Activated CD4-positive, alpha-beta T cell treated with anti-CD3 and anti-CD28 coated beads, Interleukin-2, amount 10 ng/mL, durations not matched to agents 24 days and 14 days (primary cell): ENCODE measurements at regions of chr17 and their contacts with region 1.

Region 1: GRCh38 chr17:59155439-59156182 is at the start of gene PRR11:
- DNase-seq: peak; percentile 98
- H3K4me3 Mint-ChIP-seq: no peak within 1 kb of the TSS
- H3K27ac Mint-ChIP-seq: no peak within 1 kb of the TSS
- H3K4me1 Mint-ChIP-seq: peaks cover 44% of the 10 kb centered on the region
- H3K27me3 Mint-ChIP-seq: no peaks in the 10 kb centered on the region
- total RNA-seq, gene PRR11: 29.7 and 32.6 TPM in 2 replicates

Region 2: DNA sequence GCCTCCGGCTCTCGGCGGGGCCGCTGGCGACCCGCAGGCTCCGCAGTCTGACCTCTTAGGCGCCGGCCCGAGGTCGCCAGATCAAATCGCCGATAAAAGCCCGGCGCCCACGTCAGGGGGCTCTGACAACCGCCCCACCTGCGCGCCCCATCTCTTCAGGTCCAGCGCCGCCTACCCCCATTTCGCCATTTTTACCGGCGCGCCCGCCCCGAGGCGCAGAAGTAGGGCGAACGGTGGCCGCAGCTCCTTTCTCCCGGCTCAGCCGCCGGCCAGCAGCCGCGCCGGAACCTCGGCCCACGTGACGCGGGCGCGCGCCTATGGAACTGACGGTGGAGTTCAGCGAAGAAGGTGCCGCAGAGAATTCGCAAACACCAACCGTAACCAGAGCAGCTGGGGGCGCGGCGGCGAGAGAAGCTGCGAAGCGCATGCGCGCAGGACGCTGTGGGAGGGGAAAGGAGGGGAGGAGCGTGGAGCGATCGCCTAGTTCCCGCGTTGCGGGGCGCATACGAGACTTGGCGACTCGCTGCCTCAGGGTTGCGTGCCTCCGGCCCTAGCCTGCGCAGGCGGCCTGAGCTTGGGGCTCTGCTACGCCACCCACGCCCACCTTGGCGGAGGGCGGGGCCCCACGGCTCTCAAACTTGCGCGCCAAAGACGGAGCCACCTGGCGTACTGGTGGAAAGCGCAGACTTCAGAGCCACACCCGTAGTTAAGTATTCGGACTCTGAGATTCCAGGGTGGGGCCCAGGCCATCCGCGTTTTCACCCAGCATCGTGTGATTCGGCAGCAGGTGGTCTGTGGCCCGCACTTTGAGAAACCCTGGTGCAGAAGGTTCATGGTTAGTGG is 48.9 kb before region 1 on chr17 and contains the start of gene TRIM37:
- intact Hi-C with region 1: loop called (anchors 1 kb)
- DNase-seq: peak; percentile 100
- H3K4me3 Mint-ChIP-seq: peak within 1 kb of the TSS; percentile 96
- H3K27ac Mint-ChIP-seq: peak within 1 kb of the TSS; percentile 97
- H3K4me1 Mint-ChIP-seq: peaks cover 42% of the 10 kb centered on the region
- H3K27me3 Mint-ChIP-seq: peaks cover 2% of the 10 kb centered on the region
- total RNA-seq, gene TRIM37: 26.5 and 29.3 TPM in 2 replicates

Region 3: DNA sequence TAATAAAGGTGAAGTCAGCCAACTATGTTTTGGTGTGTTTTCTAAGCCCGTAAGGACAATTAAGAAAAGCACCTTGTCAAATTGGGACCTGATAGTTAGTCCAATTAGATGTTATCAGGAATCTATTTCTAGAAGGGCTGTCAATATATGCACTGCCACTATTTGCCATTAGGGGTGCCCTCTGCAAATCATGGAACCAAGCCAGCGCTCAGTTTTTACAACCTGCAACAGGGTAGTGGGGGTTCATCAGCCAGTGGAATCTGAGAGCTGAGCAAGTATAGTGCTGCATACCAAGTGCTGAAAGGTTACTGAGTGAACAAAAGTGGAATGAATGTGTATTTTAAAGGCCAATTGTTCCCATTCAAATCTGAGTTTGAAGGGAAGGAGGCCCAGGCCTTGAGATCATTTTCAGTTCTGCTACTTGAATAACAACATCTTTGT is 10.3 kb after region 1 on chr17:
- intact Hi-C with region 1: loop called (anchors 1 kb)
- DNase-seq: peak; percentile 82
- H3K4me3 Mint-ChIP-seq: peak overlapping the region; percentile 45
- H3K27ac Mint-ChIP-seq: peak overlapping the region; percentile 46
- H3K4me1 Mint-ChIP-seq: peaks cover 18% of the 10 kb centered on the region
- H3K27me3 Mint-ChIP-seq: no peaks in the 10 kb centered on the region

Region 4: GRCh38 chr17:59220376-59221158 is 65.0 kb after region 1 on chr17 and contains the start of gene GDPD1:
- intact Hi-C with region 1: loop called (anchors 1 kb)
- DNase-seq: peak; percentile 99
- H3K4me3 Mint-ChIP-seq: peak within 1 kb of the TSS; percentile 97
- H3K27ac Mint-ChIP-seq: peak within 1 kb of the TSS; percentile 97
- H3K4me1 Mint-ChIP-seq: peaks cover 14% of the 10 kb centered on the region
- H3K27me3 Mint-ChIP-seq: peaks cover 4% of the 10 kb centered on the region
- total RNA-seq, gene GDPD1: 1.8 and 2.7 TPM in 2 replicates

Region 5: DNA sequence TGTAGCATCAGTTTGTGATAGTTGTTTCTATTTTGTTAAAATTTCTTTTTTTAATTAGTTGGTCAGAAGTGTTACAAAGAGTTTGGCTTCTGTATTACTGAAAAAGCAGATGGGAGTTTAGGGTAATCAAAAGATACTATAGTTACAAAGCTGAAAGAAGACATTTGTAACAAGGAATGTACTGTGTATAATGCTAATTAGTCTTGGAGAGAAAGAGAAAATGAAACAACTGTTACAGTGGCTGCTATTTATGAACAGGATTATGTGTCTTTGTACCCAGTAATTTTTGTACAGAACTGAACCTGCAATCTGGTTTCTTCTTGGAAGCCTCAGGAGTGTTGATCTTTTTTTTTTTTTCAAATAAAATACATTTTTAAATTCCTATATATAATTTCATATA is 79.0 kb after region 1 on chr17:
- intact Hi-C with region 1: no loop called
- DNase-seq: no peak
- H3K4me3 Mint-ChIP-seq: no peak overlapping the region
- H3K27ac Mint-ChIP-seq: no peak overlapping the region
- H3K4me1 Mint-ChIP-seq: peaks cover 4% of the 10 kb centered on the region
- H3K27me3 Mint-ChIP-seq: no peaks in the 10 kb centered on the region

Region 6: DNA sequence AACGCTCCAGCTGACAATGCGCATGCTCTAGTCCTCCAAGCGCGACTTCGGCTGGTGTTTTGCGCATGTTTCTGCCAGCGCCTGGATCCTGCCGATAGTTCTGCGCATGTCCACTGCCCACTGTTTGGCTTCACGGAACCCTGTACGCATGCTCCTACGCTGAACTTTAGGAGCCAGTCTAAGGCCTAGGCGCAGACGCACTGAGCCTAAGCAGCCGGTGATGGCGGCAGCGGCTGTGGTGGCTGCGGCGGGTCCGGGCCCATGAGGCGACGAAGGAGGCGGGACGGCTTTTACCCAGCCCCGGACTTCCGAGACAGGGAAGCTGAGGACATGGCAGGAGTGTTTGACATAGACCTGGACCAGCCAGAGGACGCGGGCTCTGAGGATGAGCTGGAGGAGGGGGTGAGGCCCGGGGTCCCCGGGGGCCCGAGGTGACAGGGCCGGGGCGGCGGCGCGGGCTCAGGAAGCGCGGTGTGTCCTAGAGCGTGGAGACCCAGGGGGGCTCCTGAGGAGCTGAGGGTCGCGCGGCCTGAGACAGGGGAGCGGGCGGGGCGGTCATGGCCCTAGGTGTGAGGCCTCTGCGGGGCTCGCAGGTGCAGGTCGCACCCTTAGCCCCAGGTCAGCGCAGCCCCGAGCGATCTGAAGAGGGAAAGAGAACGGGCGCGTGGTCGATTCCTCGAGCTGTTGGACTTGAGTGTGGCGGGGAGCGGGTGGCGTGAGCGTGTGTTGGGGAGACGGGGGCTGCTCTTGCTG is 737.5 kb after region 1 on chr17 and contains the starts of genes RPS6KB1 and TUBD1:
- intact Hi-C with region 1: loop called (anchors 5 kb)
- DNase-seq: peak; percentile 99
- H3K4me3 Mint-ChIP-seq: peak within 1 kb of the TSS; percentile 100
- H3K27ac Mint-ChIP-seq: peak within 1 kb of the TSS; percentile 100
- H3K4me1 Mint-ChIP-seq: peaks cover 40% of the 10 kb centered on the region
- H3K27me3 Mint-ChIP-seq: peaks cover 3% of the 10 kb centered on the region
- total RNA-seq, gene RPS6KB1: 64.0 and 66.4 TPM in 2 replicates
- total RNA-seq, gene TUBD1: 11.0 and 12.1 TPM in 2 replicates

Region 7: DNA sequence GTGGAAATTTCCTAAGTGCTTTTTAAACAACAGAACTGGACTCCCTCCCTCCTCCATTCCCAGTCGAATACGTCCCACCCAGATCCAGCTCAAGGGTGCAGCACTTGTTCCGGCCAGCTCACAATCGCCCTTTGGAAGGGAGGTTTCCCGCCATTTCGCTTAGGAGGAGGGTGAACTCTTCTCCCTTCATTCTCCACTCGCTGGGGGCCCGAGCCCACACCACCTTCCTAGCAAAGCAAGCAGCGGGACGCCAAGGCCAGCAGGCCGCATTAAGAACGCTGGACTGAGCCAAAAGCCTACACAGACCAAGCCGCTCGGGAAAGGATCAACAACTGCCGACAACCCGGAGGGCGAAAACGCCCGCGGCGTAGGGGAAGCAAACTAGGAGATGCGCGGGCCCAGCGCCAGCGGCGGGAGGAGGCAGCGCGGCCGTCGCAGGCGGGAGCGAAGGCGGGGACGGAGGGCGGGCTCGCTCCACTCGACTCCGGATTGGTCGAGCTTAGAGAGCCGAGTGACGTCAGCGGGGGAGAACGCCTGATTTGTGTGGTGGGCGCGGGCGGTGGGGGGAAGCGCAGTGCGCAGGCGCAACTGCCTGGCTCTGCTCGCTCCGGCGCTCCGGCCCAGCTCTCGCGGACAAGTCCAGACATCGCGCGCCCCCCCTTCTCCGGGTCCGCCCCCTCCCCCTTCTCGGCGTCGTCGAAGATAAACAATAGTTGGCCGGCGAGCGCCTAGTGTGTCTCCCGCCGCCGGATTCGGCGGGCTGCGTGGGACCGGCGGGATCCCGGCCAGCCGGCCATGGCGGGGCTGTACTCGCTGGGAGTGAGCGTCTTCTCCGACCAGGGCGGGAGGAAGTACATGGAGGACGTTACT is 1444.2 kb after region 1 on chr17 and contains the start of gene PPM1D:
- intact Hi-C with region 1: loop called (anchors 5 kb)
- DNase-seq: peak; percentile 99
- H3K4me3 Mint-ChIP-seq: peak within 1 kb of the TSS; percentile 95
- H3K27ac Mint-ChIP-seq: peak within 1 kb of the TSS; percentile 98
- H3K4me1 Mint-ChIP-seq: peaks cover 37% of the 10 kb centered on the region
- H3K27me3 Mint-ChIP-seq: no peaks in the 10 kb centered on the region
- total RNA-seq, gene PPM1D: 17.1 and 17.9 TPM in 2 replicates